MCF 10A (cell line): ENCODE measurements at regions of chr1 and their contacts with region 1.

Region 1: GRCh38 chr1:66242646-66243547 is 291.1 kb upstream of the SGIP1 start:
- DNase-seq: peak; percentile 87
- H3K4me3 Mint-ChIP-seq: no peak overlapping the region
- H3K27ac Mint-ChIP-seq: no peak overlapping the region
- H3K4me1 Mint-ChIP-seq: peaks cover 7% of the 10 kb centered on the region
- H3K27me3 Mint-ChIP-seq: peaks cover 11% of the 10 kb centered on the region
- CTCF ChIP-seq: peak; percentile 99

Region 2: GRCh38 chr1:65952696-65953095 is 290.2 kb before region 1 on chr1:
- CTCF ChIA-PET with region 1: interaction called, 105 read pairs
- POLR2A ChIA-PET with region 1: no interaction called
- intact Hi-C with region 1: no loop called
- DNase-seq: no peak
- H3K4me3 Mint-ChIP-seq: no peak overlapping the region
- H3K27ac Mint-ChIP-seq: no peak overlapping the region
- H3K4me1 Mint-ChIP-seq: no peaks in the 10 kb centered on the region
- H3K27me3 Mint-ChIP-seq: peaks cover 19% of the 10 kb centered on the region
- CTCF ChIP-seq: no peak

Region 3: DNA sequence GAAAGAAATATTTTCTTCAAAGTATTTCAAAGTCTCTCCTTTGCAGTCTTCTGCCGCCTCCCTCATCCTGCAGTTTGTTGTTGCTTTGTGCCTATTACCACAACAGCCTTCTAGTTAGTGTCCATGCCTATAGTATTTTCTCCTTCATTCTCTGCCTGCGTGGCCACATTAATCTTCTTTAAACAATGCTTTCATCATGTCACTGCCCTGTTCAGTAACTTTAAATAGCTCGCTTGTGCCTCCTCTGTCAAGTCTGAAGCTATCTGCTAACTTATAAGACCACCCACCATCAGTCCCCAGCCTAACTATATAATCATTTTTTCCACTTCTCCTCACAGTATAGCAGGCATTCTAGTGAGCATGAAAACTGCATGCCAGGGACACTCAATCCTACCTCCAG is 159.9 kb before region 1 on chr1:
- CTCF ChIA-PET with region 1: no interaction called
- POLR2A ChIA-PET with region 1: no interaction called
- intact Hi-C with region 1: no loop called
- DNase-seq: no peak
- H3K4me3 Mint-ChIP-seq: no peak overlapping the region
- H3K27ac Mint-ChIP-seq: no peak overlapping the region
- H3K4me1 Mint-ChIP-seq: no peaks in the 10 kb centered on the region
- H3K27me3 Mint-ChIP-seq: peaks cover 78% of the 10 kb centered on the region
- CTCF ChIP-seq: no peak

Region 4: DNA sequence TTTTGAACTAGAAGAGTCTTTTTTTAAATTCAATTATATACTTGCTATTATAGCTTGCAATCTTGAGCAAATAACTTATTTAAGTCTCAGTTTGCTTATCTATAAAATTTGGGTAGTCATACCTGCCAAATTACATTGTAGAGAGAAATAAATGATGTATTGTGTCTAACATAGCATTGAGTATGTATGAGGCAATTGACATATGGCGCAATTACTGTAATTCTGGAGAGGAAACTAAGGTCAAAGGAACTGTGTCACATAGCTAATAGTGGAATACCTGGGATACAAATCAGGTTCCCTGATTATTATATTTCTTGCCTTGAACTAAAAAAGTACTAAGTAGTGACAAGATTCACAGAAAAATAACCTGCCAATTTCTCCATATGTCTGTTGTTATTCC is 147.7 kb before region 1 on chr1:
- CTCF ChIA-PET with region 1: interaction called, 12 read pairs
- POLR2A ChIA-PET with region 1: no interaction called
- intact Hi-C with region 1: no loop called
- DNase-seq: peak; percentile 24
- H3K4me3 Mint-ChIP-seq: no peak overlapping the region
- H3K27ac Mint-ChIP-seq: no peak overlapping the region
- H3K4me1 Mint-ChIP-seq: no peaks in the 10 kb centered on the region
- H3K27me3 Mint-ChIP-seq: peaks cover 15% of the 10 kb centered on the region
- CTCF ChIP-seq: no peak

Region 5: DNA sequence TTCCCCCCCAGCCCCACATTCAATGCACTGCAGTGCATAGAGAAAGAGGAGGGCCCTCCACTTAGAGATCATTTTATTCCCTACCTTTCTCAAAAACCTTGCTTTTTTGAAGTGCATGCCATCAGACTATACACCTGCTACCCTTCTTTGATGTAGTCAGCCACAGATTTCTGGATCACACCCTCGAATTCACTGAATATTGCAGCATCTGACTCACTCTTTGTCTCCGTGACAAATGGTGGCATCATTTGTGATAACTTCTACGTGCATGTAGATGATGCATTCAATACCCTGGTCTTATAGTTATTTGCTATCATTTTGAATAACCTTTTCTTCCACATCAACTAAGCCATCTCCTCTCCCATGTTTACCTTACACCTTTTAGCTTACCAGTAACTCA is 19.2 kb before region 1 on chr1:
- CTCF ChIA-PET with region 1: interaction called, 57 read pairs
- POLR2A ChIA-PET with region 1: no interaction called
- intact Hi-C with region 1: no loop called
- DNase-seq: no peak
- H3K4me3 Mint-ChIP-seq: no peak overlapping the region
- H3K27ac Mint-ChIP-seq: no peak overlapping the region
- H3K4me1 Mint-ChIP-seq: no peaks in the 10 kb centered on the region
- H3K27me3 Mint-ChIP-seq: no peaks in the 10 kb centered on the region
- CTCF ChIP-seq: no peak

Region 6: DNA sequence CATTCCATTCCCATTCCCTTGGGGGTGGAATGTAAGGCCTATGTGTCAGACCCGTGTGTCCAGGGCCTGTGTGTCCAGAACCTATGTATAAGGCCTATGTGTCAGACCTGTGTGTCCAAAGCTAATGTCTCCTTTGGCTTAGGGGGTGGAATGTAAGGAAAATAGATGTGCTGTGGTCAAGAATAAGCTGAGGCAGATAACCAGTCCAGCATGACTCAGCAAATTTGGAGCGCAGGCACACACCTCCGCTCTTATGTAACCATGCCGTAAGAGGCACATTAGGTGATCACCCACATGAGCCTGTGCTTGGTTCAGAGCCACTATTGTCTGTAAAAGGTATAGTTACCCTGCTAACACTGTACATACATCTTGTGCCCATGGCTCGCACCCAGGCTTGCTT is 140.3 kb after region 1 on chr1:
- CTCF ChIA-PET with region 1: no interaction called
- POLR2A ChIA-PET with region 1: no interaction called
- intact Hi-C with region 1: no loop called
- DNase-seq: peak; percentile 13
- H3K4me3 Mint-ChIP-seq: no peak overlapping the region
- H3K27ac Mint-ChIP-seq: no peak overlapping the region
- H3K4me1 Mint-ChIP-seq: no peaks in the 10 kb centered on the region
- H3K27me3 Mint-ChIP-seq: no peaks in the 10 kb centered on the region
- CTCF ChIP-seq: no peak

Region 7: GRCh38 chr1:66436378-66437145 is 193.7 kb after region 1 on chr1:
- CTCF ChIA-PET with region 1: interaction called, 687 read pairs
- POLR2A ChIA-PET with region 1: no interaction called
- intact Hi-C with region 1: no loop called
- DNase-seq: peak; percentile 89
- H3K4me3 Mint-ChIP-seq: no peak overlapping the region
- H3K27ac Mint-ChIP-seq: peak overlapping the region; percentile 77
- H3K4me1 Mint-ChIP-seq: peaks cover 27% of the 10 kb centered on the region
- H3K27me3 Mint-ChIP-seq: no peaks in the 10 kb centered on the region
- CTCF ChIP-seq: peak; percentile 38